A673 (cell line): ENCODE measurements at regions of chr18 and their contacts with region 1.

Region 1: DNA sequence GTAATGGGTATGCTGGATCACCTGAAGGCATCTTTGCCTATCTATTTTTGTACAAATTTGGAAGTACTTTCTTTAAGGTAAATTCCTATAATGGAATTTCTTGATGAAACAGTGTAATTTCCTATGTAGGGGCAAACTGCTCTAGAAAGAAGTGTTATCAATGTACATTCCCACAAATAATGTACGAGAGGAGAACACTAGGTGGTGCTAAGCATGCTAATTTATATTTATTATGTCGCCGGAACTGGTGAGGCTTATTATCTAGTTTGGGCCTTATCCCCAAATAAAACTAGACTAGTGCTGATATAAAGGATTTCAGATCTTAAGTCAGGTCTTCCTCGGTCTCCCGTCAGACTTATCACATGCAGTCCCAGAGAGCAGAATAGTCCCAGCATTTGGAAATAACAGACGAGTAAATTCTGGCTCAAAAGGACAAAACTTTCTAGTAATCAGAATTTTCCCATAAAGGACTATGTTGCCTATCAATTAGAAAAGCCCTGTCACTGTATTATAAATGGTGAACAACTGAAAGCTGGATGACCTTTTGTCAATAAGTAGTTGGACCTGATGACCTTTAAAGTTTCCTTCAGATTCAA is 86.9 kb upstream of the RBBP8 start:
- DNase-seq: peak; percentile 77
- H3K4me3 ChIP-seq: no peak overlapping the region
- H3K27ac ChIP-seq: no peak overlapping the region
- H3K4me1 ChIP-seq: peaks cover 17% of the 10 kb centered on the region
- H3K27me3 ChIP-seq: no peaks in the 10 kb centered on the region
- CTCF ChIP-seq: peak; percentile 76

Region 2: DNA sequence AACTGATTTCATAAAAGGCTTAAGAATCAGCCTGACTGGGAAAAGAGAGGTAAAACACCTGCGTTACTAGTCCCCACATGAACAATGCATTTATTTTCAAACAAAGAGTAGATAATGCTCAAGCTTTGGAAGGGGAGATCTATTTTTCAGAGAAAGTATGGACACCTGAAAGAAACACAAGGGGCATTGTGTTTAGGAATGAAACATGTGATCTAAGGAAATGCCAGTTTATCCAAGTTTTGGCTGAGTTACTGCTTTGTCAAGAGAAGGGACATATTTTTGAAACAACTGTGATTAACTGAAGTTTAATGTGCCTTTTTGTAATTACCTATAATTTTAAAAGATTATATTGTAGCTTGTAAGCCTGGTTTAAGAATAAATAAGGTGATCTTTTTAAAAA is 37.6 kb after region 1 on chr18:
- CTCF ChIA-PET with region 1: no interaction called
- POLR2A ChIA-PET with region 1: no interaction called
- intact Hi-C with region 1: loop called (anchors 1 kb)
- DNase-seq: no peak
- H3K4me3 ChIP-seq: no peak overlapping the region
- H3K27ac ChIP-seq: no peak overlapping the region
- H3K4me1 ChIP-seq: no peaks in the 10 kb centered on the region
- H3K27me3 ChIP-seq: no peaks in the 10 kb centered on the region
- CTCF ChIP-seq: no peak

Region 3: GRCh38 chr18:24333071-24333470 is 1486.9 kb after region 1 on chr18:
- CTCF ChIA-PET with region 1: no interaction called
- POLR2A ChIA-PET with region 1: no interaction called
- intact Hi-C with region 1: no loop called
- DNase-seq: no peak
- H3K4me3 ChIP-seq: no peak overlapping the region
- H3K27ac ChIP-seq: no peak overlapping the region
- H3K4me1 ChIP-seq: no peaks in the 10 kb centered on the region
- H3K27me3 ChIP-seq: no peaks in the 10 kb centered on the region
- CTCF ChIP-seq: no peak